ENCODE measurements at regions of chr19 and their contacts with region 1.

Region 1: DNA sequence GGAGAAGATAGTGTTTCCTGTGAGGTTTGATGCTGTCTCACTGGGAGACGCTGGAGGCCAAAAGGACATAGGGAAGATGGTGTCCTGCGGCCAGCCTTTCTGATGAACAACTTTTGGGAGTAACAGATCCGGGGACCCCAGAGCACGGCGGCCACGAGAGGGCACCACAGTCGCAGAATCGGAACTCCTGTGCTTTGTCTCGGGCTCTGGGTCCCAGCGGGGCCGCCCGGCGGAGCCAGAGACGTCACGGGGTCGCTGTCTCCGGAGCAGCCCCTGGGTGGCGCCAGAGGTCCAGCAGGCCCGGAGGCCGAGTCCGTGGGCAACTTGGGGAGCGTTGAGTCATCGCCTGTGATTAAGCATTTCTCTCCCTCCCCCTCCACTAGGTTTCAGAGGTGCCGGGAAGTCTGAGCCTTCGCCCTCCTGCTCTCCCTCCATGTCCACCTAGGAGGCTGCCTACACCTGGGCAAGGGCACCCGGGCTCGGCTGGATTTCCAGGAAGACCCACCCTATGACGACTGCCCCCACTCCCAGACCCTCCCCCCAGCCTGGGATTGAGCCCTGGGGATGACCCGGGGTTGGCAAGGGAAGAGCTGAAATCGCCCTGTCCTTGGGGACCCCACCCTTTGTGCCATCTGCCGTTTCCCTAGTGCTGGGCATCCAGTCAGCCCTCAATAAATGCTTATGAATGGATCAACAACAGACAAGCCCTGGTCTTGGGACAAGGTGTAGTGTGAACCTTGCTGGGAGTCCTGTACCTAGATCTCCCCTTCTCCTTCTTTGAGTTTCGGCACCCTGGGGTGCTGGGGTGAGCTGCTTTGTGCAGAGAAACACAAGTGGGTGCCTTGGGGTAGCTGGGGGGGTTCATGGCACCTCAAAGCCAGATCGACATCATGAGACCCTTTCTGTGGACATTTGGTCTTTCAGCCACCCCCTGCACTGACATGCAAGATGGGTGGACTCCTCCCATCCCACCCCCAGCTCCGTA is 3.4 kb downstream of the NANOS3 start:
- DNase-seq: peak; percentile 99
- ATAC-seq: peak; percentile 97

Region 2: GRCh38 chr19:13833330-13834243 is 46.8 kb before region 1 on chr19:
- intact Hi-C with region 1: no loop called
- DNase-seq: peak; percentile 98
- ATAC-seq: peak; percentile 83

Region 3: DNA sequence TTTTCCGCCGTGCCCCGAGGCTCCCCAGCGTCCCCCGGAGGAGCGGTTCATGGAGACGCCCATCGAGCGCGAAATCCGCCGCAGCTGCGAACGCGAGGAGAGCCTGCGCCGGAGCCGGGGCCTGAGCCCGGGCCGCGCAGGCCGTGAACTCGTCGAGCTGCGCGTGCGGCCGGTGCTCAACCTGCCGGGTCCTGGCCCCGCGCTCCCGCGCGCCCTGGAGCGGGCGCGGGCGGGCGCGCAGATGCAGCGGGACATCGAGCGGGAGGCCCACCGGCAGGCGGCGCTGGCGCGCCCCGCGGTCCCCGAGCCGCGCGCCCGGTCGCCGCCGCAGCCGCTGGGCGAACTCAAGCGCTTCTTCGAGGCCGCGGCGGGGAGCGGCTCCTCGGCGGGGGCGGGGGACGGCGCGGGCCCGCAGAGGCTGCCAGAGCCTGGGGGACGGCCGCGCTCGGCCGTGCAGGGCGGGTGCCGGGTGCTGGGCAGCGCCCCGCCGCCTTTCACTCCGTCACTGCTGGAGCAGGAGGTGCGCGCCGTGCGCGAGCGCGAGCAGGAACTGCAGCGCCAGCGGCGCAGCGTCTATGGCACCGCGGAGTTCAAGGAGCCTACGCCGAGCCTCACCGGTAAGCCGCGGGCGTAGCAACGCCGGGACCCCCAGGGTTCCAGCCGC is 193.0 kb after region 1 on chr19:
- intact Hi-C with region 1: loop called (anchors 5 kb)
- DNase-seq: peak; percentile 90
- ATAC-seq: peak; percentile 46

Region 4: GRCh38 chr19:14117668-14118164 is 237.4 kb after region 1 on chr19 and contains the start of gene PRKACA:
- intact Hi-C with region 1: no loop called
- DNase-seq: peak; percentile 100
- ATAC-seq: peak; percentile 86
- total RNA-seq, gene PRKACA: 514 TPM